A673 (cell line): ENCODE measurements at regions of chr7 and their contacts with region 1.

Region 1: DNA sequence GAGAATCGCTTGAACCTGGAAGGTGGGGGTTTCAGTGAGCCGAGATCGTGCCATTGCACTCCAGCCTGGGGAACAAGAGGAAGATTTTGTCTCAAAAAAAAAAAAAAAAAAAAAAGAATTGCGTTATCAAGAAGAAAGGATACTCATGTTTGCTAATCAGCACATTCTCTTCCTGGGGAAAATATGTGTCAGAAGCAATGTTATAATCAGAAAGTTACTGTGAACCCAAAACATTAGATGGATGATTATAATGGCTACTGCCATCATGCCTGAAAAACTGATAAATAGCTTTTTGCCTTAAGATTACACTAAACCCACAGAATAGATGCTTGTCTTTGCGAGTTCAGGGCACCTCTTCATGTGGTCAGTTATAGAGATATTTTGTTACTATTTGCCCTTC is 24.3 kb upstream of the GNAI1 start:
- DNase-seq: no peak
- H3K4me3 ChIP-seq: no peak overlapping the region
- H3K27ac ChIP-seq: no peak overlapping the region
- H3K4me1 ChIP-seq: no peaks in the 10 kb centered on the region
- H3K27me3 ChIP-seq: no peaks in the 10 kb centered on the region
- CTCF ChIP-seq: no peak

Region 2: DNA sequence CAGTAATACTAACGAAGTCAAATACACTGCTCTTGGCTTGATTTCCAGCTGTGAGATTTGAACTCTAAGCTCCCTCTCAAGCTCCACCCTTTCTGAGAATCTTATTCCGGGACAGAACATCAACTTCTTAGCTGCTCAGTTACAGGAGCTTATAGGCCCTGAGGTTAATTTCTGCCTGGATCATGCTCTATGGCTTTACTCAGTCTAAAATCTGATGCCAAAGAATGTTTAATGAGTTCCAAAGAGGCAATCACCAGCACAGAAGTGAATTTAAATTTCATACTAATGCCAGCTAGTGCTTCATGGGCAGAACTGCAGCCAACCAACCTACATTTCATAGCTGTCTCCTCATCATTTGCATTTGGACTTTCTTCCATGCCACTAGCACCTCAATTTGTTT is 1364.1 kb before region 1 on chr7:
- CTCF ChIA-PET with region 1: no interaction called
- POLR2A ChIA-PET with region 1: interaction called, 22 read pairs
- intact Hi-C with region 1: no loop called
- DNase-seq: no peak
- H3K4me3 ChIP-seq: no peak overlapping the region
- H3K27ac ChIP-seq: no peak overlapping the region
- H3K4me1 ChIP-seq: no peaks in the 10 kb centered on the region
- H3K27me3 ChIP-seq: no peaks in the 10 kb centered on the region
- CTCF ChIP-seq: no peak

Region 3: GRCh38 chr7:79882916-79883315 is 227.5 kb before region 1 on chr7:
- CTCF ChIA-PET with region 1: no interaction called
- POLR2A ChIA-PET with region 1: no interaction called
- intact Hi-C with region 1: no loop called
- DNase-seq: no peak
- H3K4me3 ChIP-seq: no peak overlapping the region
- H3K27ac ChIP-seq: no peak overlapping the region
- H3K4me1 ChIP-seq: no peaks in the 10 kb centered on the region
- H3K27me3 ChIP-seq: peaks cover 43% of the 10 kb centered on the region
- CTCF ChIP-seq: no peak

Region 4: GRCh38 chr7:80859272-80859970 is 749.0 kb after region 1 on chr7:
- CTCF ChIA-PET with region 1: no interaction called
- POLR2A ChIA-PET with region 1: no interaction called
- intact Hi-C with region 1: no loop called
- DNase-seq: no peak
- H3K4me3 ChIP-seq: no peak overlapping the region
- H3K27ac ChIP-seq: no peak overlapping the region
- H3K4me1 ChIP-seq: no peaks in the 10 kb centered on the region
- H3K27me3 ChIP-seq: no peaks in the 10 kb centered on the region
- CTCF ChIP-seq: no peak